Heart right ventricle (tissue), 16 donors: ENCODE measurements at regions of chr12 and their contacts with region 1.

Region 1: DNA sequence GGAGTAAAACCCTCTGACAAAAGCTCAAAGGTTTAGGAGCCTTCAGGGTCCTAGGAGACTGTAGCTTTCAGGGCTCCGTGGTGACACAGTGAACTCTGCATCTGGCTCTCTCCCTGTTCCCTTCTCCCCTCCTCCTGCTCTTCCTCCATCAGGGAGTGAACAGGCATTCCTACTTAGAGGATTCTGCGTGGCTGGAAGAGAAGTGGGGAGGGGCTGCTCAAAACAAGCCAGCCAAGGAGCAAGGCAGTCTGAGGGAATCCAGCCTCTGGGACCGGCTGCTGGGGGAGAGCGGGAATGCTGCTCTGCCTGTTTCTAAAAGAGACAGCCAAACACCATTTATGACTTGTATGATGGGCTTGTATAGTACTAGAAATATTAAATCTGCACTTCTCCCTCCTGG is 49.5 kb downstream of the RBMS2 start:
- DNase-seq: no peak
- ATAC-seq: peak in 5 of 8 donors; percentile 13 to 52 (median 36)
- H3K4me3 ChIP-seq: no peak overlapping the region
- H3K27ac ChIP-seq: peak overlapping the region in 8 of 10 donors; percentile 3 to 90 (median 64)
- H3K4me1 ChIP-seq: peaks cover 6 to 59% (median 38%) of the 10 kb centered on the region in 9 donors
- H3K27me3 ChIP-seq: no peaks in the 10 kb centered on the region
- CTCF ChIP-seq: no peak

Region 2: DNA sequence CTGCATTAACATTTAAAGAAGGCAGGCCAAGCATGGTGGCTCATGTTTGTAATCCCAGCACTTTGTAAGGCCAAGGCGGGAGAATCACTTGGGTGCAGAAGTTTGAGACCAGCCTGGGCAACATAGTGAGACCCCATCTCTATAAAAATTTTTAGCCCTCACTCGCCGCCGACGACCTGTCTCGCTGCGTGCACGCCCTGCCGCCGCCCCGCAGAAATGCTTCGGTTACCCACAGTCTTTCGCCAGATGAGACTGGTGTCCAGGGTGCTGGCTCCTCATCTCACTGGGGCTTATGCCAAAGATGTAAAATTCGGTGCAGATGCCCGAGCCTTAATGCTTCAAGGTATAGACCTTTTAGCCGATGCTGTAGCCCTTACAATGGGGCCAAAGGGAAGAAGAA is 60.3 kb before region 1 on chr12:
- intact Hi-C with region 1: loop called in 9 of 10 experiments (anchors 1 to 5 kb)
- DNase-seq: no peak
- ATAC-seq: no peak
- H3K4me3 ChIP-seq: no peak overlapping the region
- H3K27ac ChIP-seq: no peak overlapping the region
- H3K4me1 ChIP-seq: peaks cover 0 to 7% (median 0%) of the 10 kb centered on the region in 9 donors
- H3K27me3 ChIP-seq: no peaks in the 10 kb centered on the region
- CTCF ChIP-seq: no peak

Region 3: GRCh38 chr12:56622535-56622934 is 51.4 kb after region 1 on chr12:
- intact Hi-C with region 1: no loop called
- DNase-seq: no peak
- ATAC-seq: no peak
- H3K4me3 ChIP-seq: no peak overlapping the region
- H3K27ac ChIP-seq: no peak overlapping the region
- H3K4me1 ChIP-seq: peaks cover 12 to 94% (median 72%) of the 10 kb centered on the region in 9 donors
- H3K27me3 ChIP-seq: no peaks in the 10 kb centered on the region
- CTCF ChIP-seq: no peak